ENCODE measurements at regions of chr18 and their contacts with region 1.

Region 1: GRCh38 chr18:3604498-3605408 is 154.8 kb downstream of the TGIF1 start:
- DNase-seq: no peak

Region 2: GRCh38 chr18:3384664-3385189 is 220.0 kb before region 1 on chr18:
- CTCF ChIA-PET with region 1: no interaction called
- POLR2A ChIA-PET with region 1: no interaction called
- DNase-seq: no peak

Region 3: GRCh38 chr18:3593904-3594661 is 10.7 kb before region 1 on chr18:
- CTCF ChIA-PET with region 1: interaction called, 6 read pairs
- POLR2A ChIA-PET with region 1: interaction called, 19 read pairs
- DNase-seq: peak; percentile 63

Region 4: DNA sequence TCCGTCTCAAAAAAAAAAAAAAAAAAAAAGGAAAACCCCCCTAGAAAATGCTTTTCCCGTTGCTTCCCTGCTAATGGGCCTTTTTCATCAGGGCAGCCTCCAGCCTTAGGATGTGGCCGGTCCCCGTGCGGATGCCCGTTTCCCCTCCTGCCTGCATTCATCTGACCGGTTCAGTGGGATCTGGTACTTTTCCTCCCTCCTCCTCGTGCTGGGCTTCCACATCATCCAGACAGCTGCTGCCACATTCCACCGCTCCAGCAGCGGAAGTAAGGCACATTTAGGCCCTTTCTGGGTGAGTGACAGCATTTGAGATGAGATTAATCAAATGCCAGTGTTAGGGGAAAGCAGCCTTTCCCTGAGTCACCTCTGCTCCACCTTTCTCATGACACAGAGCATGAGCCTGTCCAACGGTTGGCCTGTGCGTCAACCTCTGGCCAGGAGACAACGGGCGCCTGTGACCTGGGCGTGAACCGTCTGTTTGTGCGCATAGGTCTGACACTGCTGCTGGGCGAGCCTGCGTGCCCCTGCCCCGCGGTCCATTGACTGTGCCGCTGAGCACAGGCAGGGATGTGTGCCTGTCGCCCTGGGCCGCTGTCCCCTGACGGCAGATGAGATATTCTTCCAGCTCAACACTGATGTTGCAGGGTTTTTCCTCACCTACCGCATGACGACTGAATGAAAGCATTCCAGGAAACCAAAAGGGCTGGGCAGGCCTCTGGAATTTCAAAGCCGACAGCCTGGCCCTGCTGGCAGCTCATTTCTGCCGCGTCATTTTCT is 19.2 kb after region 1 on chr18:
- CTCF ChIA-PET with region 1: no interaction called
- POLR2A ChIA-PET with region 1: interaction called, 11 read pairs
- DNase-seq: no peak

Region 5: GRCh38 chr18:3665780-3666525 is 61.2 kb after region 1 on chr18:
- CTCF ChIA-PET with region 1: interaction called, 3 read pairs
- POLR2A ChIA-PET with region 1: interaction called, 15 read pairs
- DNase-seq: peak; percentile 74